Naive thymus-derived CD8-positive, alpha-beta T cell (primary cell): ENCODE measurements at regions of chr7 and their contacts with region 1.

Region 1: DNA sequence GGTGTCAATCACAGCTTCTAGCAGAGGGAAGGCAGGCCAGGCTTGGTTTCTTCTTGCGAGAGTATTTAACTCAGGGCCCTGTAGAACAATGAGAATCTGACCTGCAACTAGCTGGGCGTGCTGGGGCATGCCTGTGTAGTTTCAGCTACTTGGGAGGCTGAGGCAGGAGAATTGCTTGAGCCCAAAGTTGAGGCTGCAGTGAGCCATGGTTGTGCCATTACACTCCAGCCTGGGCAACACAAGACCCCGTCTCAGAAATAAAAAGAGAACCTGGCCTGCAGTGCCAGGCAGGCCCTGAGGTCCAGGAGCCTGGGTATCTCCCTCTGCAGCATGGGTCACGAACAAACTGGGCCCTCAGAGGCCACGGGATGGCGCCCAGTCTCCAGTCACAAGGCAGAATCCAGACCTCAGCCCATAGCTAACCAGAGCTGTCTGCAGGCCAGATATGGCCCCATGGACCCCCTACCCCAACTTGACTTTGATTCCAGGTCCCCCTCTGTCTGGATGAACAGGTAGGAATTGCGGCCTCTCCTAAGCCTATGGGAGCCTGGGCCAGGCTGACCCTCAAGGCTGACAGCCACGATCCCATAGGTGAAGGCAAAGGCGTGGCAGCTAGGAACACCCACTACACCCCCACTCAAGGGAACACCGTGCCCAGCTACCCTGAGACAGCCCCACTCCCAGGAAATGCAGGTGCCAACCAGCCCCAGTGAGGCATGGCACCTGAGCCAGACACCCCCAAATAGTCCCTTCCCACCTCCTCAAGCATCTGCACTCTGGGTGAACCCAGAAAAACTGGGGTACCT is 102.7 kb upstream of the TNRC18 start:
- DNase-seq: peak in 4 of 10 donors; percentile 19 to 43 (median 30)
- ATAC-seq: no peak
- H3K4me3 Mint-ChIP-seq: peak overlapping the region; percentile 95 to 100 (median 98)
- H3K27ac Mint-ChIP-seq: peak overlapping the region; percentile 88 to 99 (median 96)
- H3K4me1 Mint-ChIP-seq: peaks cover 18 to 48% (median 37%) of the 10 kb centered on the region in 4 donors
- H3K27me3 Mint-ChIP-seq: peaks cover 0 to 2% (median 0%) of the 10 kb centered on the region in 5 donors

Region 2: DNA sequence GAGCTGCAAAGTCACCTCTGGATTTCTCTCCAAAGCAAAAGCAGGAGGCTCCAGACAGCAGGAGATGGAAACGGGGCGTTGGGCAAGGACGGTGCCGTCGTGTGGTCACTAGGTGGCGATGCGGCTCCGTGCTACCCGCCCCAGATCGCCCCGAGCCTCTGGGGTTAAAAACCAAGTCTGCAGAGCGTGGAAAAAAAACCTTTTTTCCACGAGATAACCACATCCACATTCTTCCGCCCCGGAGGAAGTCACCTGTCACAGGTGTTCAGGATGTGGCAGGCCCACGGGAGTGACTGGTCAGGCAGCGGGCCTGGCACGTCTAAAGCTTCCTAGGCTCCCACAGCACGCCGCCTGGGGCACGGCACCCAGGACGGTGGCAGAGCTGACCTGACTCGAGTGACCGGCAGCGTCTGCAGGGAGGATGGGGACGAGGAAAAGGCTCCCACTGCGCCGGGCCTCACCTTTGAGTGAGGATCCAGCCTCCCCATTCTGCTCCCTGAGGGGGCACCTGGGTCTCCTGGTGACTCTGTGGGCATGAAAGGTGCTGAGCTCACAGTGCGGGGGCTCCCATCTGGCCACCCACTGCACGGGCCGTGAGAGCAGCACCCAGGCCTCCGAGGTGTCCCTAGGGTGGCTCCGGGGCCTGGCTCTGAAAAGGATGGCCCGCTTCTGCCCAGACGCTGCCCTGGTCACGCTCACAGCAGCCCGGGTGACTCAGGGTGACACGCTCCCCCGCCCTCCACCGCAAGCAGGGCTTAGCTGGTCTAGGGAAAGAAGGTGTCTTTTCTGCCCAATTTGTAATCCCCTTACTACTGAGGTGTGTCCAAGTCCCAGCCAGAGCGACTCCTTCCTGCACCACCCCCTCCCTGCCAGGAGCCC is 31.4 kb before region 1 on chr7:
- POLR2A ChIA-PET with region 1: interaction called, 32 read pairs
- DNase-seq: peak; percentile 65 to 87 (median 74)
- ATAC-seq: peak; percentile 75 to 81
- H3K4me3 Mint-ChIP-seq: peak overlapping the region; percentile 18 to 80 (median 51)
- H3K27ac Mint-ChIP-seq: peak overlapping the region in 4 of 10 donors; percentile 34 to 70 (median 56)
- H3K4me1 Mint-ChIP-seq: peaks cover 29 to 57% (median 46%) of the 10 kb centered on the region in 4 donors
- H3K27me3 Mint-ChIP-seq: no peaks in the 10 kb centered on the region